HCT116 (cell line): ENCODE measurements at regions of chr10 and their contacts with region 1.

Region 1: DNA sequence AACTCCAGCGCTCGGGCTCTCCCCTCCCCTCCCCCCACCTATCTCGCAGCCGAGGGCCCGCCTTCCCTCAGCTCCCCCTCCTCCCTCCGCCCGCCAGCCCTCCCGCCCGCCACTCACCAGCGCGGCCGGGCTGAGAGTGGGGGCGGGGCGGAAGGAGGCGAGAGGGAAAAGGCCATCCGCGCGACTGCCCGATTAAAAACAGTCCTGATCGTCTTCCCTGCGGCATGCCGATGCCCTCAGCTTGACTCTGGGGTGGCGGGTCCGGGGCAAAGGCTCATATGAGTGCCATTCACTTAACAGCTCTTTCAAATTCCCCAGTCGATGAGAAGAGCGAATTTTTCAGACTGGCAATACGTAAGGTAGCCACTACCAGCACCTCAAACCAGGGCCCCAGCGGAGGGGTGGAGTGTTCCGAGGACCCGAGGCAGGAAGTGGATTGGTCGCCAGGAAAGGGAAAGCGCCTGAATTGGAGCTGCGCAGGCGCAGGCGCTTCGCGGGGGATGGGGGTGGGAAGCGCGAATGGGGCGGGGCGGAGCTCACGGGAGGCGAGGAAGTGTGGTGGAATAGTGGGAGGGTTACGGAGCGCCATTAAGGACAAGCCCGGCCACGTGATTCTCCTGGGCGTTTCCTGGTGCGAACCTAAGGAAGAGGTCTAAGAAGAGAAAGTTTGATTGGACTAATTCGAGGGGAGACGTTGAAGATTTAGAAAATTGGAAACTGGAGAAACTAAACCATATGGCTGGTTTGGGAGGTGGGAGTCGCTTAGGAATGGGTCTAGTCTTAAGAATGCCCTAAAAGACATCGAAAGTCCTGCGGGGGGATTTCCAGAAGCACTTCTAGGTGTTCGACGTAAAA is at the start of gene UPF2:
- DNase-seq: peak; percentile 97
- ATAC-seq: peak; percentile 90
- H3K4me3 ChIP-seq: peak within 1 kb of the TSS; percentile 97
- H3K27ac ChIP-seq: peak within 1 kb of the TSS; percentile 98
- H3K4me1 ChIP-seq: peaks cover 10 to 27% of the 10 kb centered on the region in 2 experiments; a peak in 3 of 4 replicates
- H3K27me3 ChIP-seq: no peaks in the 10 kb centered on the region
- CTCF ChIP-seq: no peak
- POLR2A ChIP-seq: peak; percentile 46
- RAD21 ChIP-seq: no peak
- total RNA-seq, gene UPF2: 27.3 TPM

Region 2: GRCh38 chr10:12068449-12069269 is 25.6 kb after region 1 on chr10 and contains the start of gene DHTKD1:
- CTCF ChIA-PET with region 1: no interaction called
- POLR2A ChIA-PET with region 1: interaction called, 6 read pairs
- RAD21 ChIA-PET with region 1: no interaction called
- intact Hi-C with region 1: loop called (anchors 2 kb)
- DNase-seq: peak; percentile 94
- ATAC-seq: peak; percentile 98
- H3K4me3 ChIP-seq: peak within 1 kb of the TSS; percentile 83 to 86
- H3K27ac ChIP-seq: peak within 1 kb of the TSS; percentile 61
- H3K4me1 ChIP-seq: peaks cover 15 to 41% of the 10 kb centered on the region in 2 experiments
- H3K27me3 ChIP-seq: no peaks in the 10 kb centered on the region
- CTCF ChIP-seq: peak in 1 of 3 experiments; percentile 32; a peak in 2 of 6 replicates
- POLR2A ChIP-seq: peak; percentile 57
- RAD21 ChIP-seq: no peak
- total RNA-seq, gene DHTKD1: 20.6 TPM

Region 3: GRCh38 chr10:12264204-12264940 is 221.3 kb after region 1 on chr10:
- CTCF ChIA-PET with region 1: no interaction called
- POLR2A ChIA-PET with region 1: no interaction called
- RAD21 ChIA-PET with region 1: no interaction called
- intact Hi-C with region 1: no loop called
- DNase-seq: peak; percentile 60
- ATAC-seq: peak; percentile 97
- H3K4me3 ChIP-seq: peak overlapping the region in 1 of 2 experiments; percentile 33; a peak in 2 of 4 replicates
- H3K27ac ChIP-seq: no peak overlapping the region; the same call in 1 of the 2 replicates
- H3K4me1 ChIP-seq: peaks cover 8 to 17% of the 10 kb centered on the region in 2 experiments; a peak in 3 of 4 replicates
- H3K27me3 ChIP-seq: no peaks in the 10 kb centered on the region
- CTCF ChIP-seq: peak; percentile 69 to 87 (median 69)
- POLR2A ChIP-seq: no peak
- RAD21 ChIP-seq: peak; percentile 98

Region 4: DNA sequence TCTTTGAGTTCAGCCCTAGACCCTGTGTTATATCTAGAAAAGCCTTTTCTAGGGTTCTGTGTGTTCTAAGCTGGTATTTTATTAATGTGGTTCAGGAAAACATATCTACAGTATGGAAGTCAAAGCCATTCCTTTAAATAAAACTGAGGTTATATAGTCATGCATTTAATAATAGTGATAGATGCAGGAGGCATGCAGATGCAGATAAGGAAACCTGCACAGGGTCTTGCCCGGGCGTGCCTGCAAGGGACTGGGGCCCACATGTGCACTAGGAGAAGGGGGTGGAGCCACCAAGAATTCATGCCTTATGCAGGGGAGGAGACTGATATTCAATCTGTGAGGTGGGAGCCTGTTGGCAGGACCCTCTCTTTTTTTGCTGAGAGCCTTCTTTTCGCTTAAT is 1715.3 kb after region 1 on chr10:
- CTCF ChIA-PET with region 1: no interaction called
- POLR2A ChIA-PET with region 1: no interaction called
- RAD21 ChIA-PET with region 1: no interaction called
- intact Hi-C with region 1: no loop called
- DNase-seq: peak; percentile 3
- ATAC-seq: peak; percentile 88
- H3K4me3 ChIP-seq: no peak overlapping the region
- H3K27ac ChIP-seq: peak overlapping the region; percentile 65; the same call in 1 of the 2 replicates
- H3K4me1 ChIP-seq: peaks cover 11 to 15% of the 10 kb centered on the region in 2 experiments
- H3K27me3 ChIP-seq: no peaks in the 10 kb centered on the region
- CTCF ChIP-seq: no peak
- POLR2A ChIP-seq: no peak
- RAD21 ChIP-seq: no peak